Activated CD4-positive, alpha-beta T cell treated with anti-CD3 and anti-CD28 coated beads for 36 hours (primary cell): ENCODE measurements at regions of chr1 and their contacts with region 1.

Region 1: GRCh38 chr1:156259805-156260204 is 11.9 kb upstream of the PAQR6 start:
- DNase-seq: no peak
- ATAC-seq: no peak
- H3K4me3 Mint-ChIP-seq: no peak overlapping the region
- H3K27ac Mint-ChIP-seq: no peak overlapping the region
- H3K4me1 Mint-ChIP-seq: peaks cover 9% of the 10 kb centered on the region
- H3K27me3 Mint-ChIP-seq: no peaks in the 10 kb centered on the region

Region 2: DNA sequence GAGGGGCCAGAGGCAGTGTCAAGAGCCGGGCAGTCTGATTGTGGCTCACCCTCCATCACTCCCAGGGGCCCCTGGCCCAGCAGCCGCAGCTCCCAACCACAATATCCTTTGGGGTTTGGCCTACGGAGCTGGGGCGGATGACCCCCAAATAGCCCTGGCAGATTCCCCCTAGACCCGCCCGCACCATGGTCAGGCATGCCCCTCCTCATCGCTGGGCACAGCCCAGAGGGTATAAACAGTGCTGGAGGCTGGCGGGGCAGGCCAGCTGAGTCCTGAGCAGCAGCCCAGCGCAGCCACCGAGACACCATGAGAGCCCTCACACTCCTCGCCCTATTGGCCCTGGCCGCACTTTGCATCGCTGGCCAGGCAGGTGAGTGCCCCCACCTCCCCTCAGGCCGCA is 17.9 kb before region 1 on chr1 and contains the start of gene BGLAP:
- CTCF ChIA-PET with region 1: no interaction called
- POLR2A ChIA-PET with region 1: no interaction called
- intact Hi-C with region 1: loop called in 1 of 2 experiments (anchors 2 kb)
- DNase-seq: no peak
- ATAC-seq: no peak
- H3K4me3 Mint-ChIP-seq: no peak within 1 kb of the TSS
- H3K27ac Mint-ChIP-seq: no peak within 1 kb of the TSS
- H3K4me1 Mint-ChIP-seq: peaks cover 14% of the 10 kb centered on the region
- H3K27me3 Mint-ChIP-seq: peaks cover 4% of the 10 kb centered on the region
- total RNA-seq, gene BGLAP: 2.1 to 2.4 TPM